CD4-positive, alpha-beta memory T cell (primary cell): ENCODE measurements at regions of chr1 and their contacts with region 1.

Region 1: GRCh38 chr1:92310185-92310597 is 11.3 kb downstream of the RPAP2 start:
- DNase-seq: peak in 4 of 5 donors; percentile 34 to 44 (median 40)
- H3K4me3 ChIP-seq: no peak overlapping the region
- H3K4me3 Mint-ChIP-seq: peak overlapping the region in 1 of 8 donors; percentile 36
- H3K27ac ChIP-seq: no peak overlapping the region
- H3K27ac Mint-ChIP-seq: peak overlapping the region in 2 of 7 donors; percentile 47 to 72
- H3K4me1 ChIP-seq: peaks cover 32% of the 10 kb centered on the region
- H3K4me1 Mint-ChIP-seq: peaks cover 21 to 37% (median 31%) of the 10 kb centered on the region in 4 donors
- H3K27me3 ChIP-seq: no peaks in the 10 kb centered on the region
- H3K27me3 Mint-ChIP-seq: no peaks in the 10 kb centered on the region

Region 2: GRCh38 chr1:92298573-92299476 is 11.4 kb before region 1 on chr1 and contains the starts of genes GLMN and RPAP2:
- CTCF ChIA-PET with region 1: interaction called, 19 read pairs
- POLR2A ChIA-PET with region 1: interaction called, 11 read pairs
- intact Hi-C with region 1: no loop called
- DNase-seq: peak; percentile 69 to 79 (median 75)
- H3K4me3 ChIP-seq: peak within 1 kb of the TSS; percentile 75 to 87
- H3K4me3 Mint-ChIP-seq: peak within 1 kb of the TSS; percentile 95 to 99 (median 98)
- H3K27ac ChIP-seq: peak within 1 kb of the TSS; percentile 88
- H3K27ac Mint-ChIP-seq: peak within 1 kb of the TSS; percentile 87 to 99 (median 98)
- H3K4me1 ChIP-seq: peaks cover 29% of the 10 kb centered on the region
- H3K4me1 Mint-ChIP-seq: peaks cover 23 to 51% (median 26%) of the 10 kb centered on the region in 4 donors
- H3K27me3 ChIP-seq: no peaks in the 10 kb centered on the region
- H3K27me3 Mint-ChIP-seq: no peaks in the 10 kb centered on the region
- total RNA-seq, gene GLMN: 13.9 to 14.7 TPM
- total RNA-seq, gene RPAP2: 39.0 to 44.0 TPM

Region 3: DNA sequence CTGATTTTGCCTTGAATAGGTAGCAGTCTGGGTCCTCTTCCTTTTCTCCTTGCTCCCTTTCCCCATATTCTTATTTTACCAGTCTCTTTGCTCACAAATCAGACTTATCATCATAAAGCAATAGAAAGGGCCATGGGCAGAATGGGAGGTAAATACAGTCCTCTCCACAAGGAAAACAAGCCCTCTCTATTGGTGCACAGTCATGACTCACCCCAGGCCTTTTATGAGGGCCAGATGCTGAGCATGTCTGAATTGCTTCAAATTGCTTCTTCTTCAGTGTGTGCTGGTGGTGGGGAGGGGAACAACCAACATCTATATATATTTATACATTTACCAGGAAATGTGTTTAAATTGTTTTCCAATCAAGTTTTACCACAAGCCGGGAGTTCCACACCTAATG is 101.3 kb after region 1 on chr1:
- CTCF ChIA-PET with region 1: interaction called, 13 read pairs
- POLR2A ChIA-PET with region 1: interaction called, 3 read pairs
- intact Hi-C with region 1: loop called (anchors 5 kb)
- DNase-seq: no peak
- H3K4me3 ChIP-seq: no peak overlapping the region
- H3K4me3 Mint-ChIP-seq: peak overlapping the region in 6 of 8 donors; percentile 18 to 71 (median 42)
- H3K27ac ChIP-seq: no peak overlapping the region
- H3K27ac Mint-ChIP-seq: peak overlapping the region in 4 of 7 donors; percentile 2 to 54 (median 14)
- H3K4me1 ChIP-seq: peaks cover 29% of the 10 kb centered on the region
- H3K4me1 Mint-ChIP-seq: peaks cover 33 to 54% (median 37%) of the 10 kb centered on the region in 4 donors
- H3K27me3 ChIP-seq: no peaks in the 10 kb centered on the region
- H3K27me3 Mint-ChIP-seq: no peaks in the 10 kb centered on the region

Region 4: GRCh38 chr1:92476071-92476631 is 166.0 kb after region 1 on chr1:
- CTCF ChIA-PET with region 1: interaction called, 10 read pairs
- POLR2A ChIA-PET with region 1: no interaction called
- intact Hi-C with region 1: no loop called
- DNase-seq: peak; percentile 46 to 90 (median 54)
- H3K4me3 ChIP-seq: no peak overlapping the region
- H3K4me3 Mint-ChIP-seq: peak overlapping the region in 7 of 8 donors; percentile 21 to 63 (median 52)
- H3K27ac ChIP-seq: peak overlapping the region; percentile 22
- H3K27ac Mint-ChIP-seq: peak overlapping the region; percentile 58 to 89 (median 86)
- H3K4me1 ChIP-seq: peaks cover 65% of the 10 kb centered on the region
- H3K4me1 Mint-ChIP-seq: peaks cover 37 to 77% (median 59%) of the 10 kb centered on the region in 4 donors
- H3K27me3 ChIP-seq: no peaks in the 10 kb centered on the region
- H3K27me3 Mint-ChIP-seq: no peaks in the 10 kb centered on the region

Region 5: DNA sequence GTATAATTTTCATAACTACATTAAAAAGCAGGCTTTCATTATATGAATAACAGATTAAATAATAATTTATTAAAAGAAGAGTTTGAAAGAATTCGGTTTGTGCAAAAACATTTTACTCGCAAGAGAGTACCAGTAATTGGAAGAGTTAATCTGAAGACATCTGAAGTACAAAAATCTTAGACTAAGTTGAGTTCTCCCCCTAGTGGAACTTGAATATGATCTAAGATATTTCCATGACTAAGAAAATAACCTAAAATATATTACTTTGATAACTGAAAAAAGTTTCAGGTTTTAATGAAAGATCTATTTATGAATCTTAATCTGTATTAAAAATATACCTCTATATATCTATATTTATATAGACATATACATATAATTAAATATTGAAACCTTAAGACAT is 289.0 kb after region 1 on chr1:
- CTCF ChIA-PET with region 1: interaction called, 28 read pairs
- POLR2A ChIA-PET with region 1: no interaction called
- intact Hi-C with region 1: loop called (anchors 1 kb)
- DNase-seq: peak in 4 of 5 donors; percentile 36 to 46 (median 42)
- H3K4me3 ChIP-seq: no peak overlapping the region
- H3K4me3 Mint-ChIP-seq: no peak overlapping the region
- H3K27ac ChIP-seq: no peak overlapping the region
- H3K27ac Mint-ChIP-seq: peak overlapping the region in 1 of 7 donors; percentile 25
- H3K4me1 ChIP-seq: no peaks in the 10 kb centered on the region
- H3K4me1 Mint-ChIP-seq: peaks cover 0 to 4% (median 1%) of the 10 kb centered on the region in 4 donors
- H3K27me3 ChIP-seq: no peaks in the 10 kb centered on the region
- H3K27me3 Mint-ChIP-seq: no peaks in the 10 kb centered on the region

Region 6: DNA sequence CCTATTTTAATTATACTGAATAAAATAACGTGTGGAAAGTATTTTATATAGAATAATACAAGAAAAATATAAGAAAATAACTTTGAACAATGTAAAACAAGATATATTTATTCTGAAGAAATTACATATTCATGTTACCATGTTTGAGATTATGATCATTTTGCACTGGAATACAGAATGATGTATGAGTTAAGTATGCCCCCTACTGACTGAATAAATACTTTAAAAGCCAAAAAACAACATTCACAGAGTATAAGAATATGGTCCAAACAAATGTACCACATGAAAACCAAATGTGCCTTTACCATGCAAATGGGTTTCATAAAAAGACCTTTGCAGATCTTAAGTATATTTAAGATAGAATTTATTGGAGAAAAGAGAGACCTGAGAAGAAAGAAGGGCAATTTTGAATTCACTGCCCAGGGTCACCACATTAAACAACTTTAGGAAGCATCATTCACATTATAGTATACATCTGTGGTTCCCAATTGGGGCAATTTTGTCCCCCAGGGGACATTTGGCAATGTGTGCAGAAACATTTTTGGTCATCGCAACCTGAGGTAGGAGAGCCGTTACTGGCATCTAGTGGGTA is 313.1 kb after region 1 on chr1:
- CTCF ChIA-PET with region 1: interaction called, 33 read pairs
- POLR2A ChIA-PET with region 1: no interaction called
- intact Hi-C with region 1: loop called (anchors 1 kb)
- DNase-seq: peak in 4 of 5 donors; percentile 29 to 42 (median 36)
- H3K4me3 ChIP-seq: no peak overlapping the region
- H3K4me3 Mint-ChIP-seq: no peak overlapping the region
- H3K27ac ChIP-seq: no peak overlapping the region
- H3K27ac Mint-ChIP-seq: no peak overlapping the region
- H3K4me1 ChIP-seq: no peaks in the 10 kb centered on the region
- H3K4me1 Mint-ChIP-seq: no peaks in the 10 kb centered on the region
- H3K27me3 ChIP-seq: no peaks in the 10 kb centered on the region
- H3K27me3 Mint-ChIP-seq: no peaks in the 10 kb centered on the region